WTC11 (cell line): ENCODE measurements at regions of chr6 and their contacts with region 1.

Region 1: GRCh38 chr6:141309295-141309694 is 823.4 kb upstream of the GJE1 start:
- DNase-seq: no peak
- ATAC-seq: peak; percentile 95
- H3K4me3 Mint-ChIP-seq: no peak overlapping the region
- H3K27ac Mint-ChIP-seq: no peak overlapping the region
- H3K4me1 Mint-ChIP-seq: peaks cover 21% of the 10 kb centered on the region
- H3K27me3 Mint-ChIP-seq: no peaks in the 10 kb centered on the region; the same call in 1 of the 2 replicates
- CTCF ChIP-seq: no peak

Region 2: DNA sequence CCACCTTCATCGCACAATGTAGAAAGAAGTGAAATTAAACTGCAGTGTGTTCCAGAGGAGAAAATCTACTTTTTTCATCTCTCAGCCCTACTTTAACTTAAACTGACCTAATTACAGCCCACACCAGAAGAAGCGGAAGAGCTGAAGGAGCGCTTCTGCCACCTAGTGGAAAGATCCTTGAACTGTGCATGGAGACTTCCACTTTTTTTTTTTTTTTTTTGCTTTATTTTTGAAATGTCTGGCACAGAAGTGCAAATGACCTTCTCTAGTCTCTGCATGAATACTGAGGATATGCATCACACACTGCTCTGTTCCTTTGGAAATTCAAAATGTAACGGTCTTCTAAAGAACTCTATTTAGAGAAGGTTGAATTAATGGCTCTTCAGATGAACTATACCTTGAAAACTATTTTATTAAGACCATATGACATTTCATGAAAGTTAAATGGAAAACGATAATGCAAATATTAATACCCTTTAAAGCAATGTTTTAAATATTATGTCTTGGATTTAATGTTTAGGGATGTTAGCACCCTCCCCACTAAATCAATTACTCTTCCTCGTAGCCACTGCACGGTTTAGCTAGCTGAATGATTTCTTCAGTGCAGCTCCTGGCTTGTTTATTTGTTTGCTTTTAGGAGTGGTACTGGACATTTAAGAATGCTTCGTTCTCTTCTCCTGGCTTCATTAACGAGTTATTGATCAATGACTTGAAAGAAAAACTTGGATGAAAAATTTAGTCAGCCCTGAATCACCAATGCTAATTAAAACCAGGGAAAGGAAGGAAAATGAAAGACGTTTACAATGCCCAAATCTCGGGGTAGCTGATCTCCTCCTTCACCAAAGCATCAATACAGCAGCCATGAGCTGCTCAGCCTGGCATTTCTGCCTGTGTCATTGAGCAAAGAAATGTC is 253.8 kb after region 1 on chr6:
- CTCF ChIA-PET with region 1: interaction called, 10 read pairs
- POLR2A ChIA-PET with region 1: no interaction called
- DNase-seq: peak; percentile 35
- ATAC-seq: peak; percentile 80
- H3K4me3 Mint-ChIP-seq: peak overlapping the region; percentile 43
- H3K27ac Mint-ChIP-seq: peak overlapping the region; percentile 95
- H3K4me1 Mint-ChIP-seq: peaks cover 38% of the 10 kb centered on the region
- H3K27me3 Mint-ChIP-seq: no peaks in the 10 kb centered on the region
- CTCF ChIP-seq: peak; percentile 72